CD14-positive monocyte (primary cell): ENCODE measurements at regions of chr19 and their contacts with region 1.

Region 1: DNA sequence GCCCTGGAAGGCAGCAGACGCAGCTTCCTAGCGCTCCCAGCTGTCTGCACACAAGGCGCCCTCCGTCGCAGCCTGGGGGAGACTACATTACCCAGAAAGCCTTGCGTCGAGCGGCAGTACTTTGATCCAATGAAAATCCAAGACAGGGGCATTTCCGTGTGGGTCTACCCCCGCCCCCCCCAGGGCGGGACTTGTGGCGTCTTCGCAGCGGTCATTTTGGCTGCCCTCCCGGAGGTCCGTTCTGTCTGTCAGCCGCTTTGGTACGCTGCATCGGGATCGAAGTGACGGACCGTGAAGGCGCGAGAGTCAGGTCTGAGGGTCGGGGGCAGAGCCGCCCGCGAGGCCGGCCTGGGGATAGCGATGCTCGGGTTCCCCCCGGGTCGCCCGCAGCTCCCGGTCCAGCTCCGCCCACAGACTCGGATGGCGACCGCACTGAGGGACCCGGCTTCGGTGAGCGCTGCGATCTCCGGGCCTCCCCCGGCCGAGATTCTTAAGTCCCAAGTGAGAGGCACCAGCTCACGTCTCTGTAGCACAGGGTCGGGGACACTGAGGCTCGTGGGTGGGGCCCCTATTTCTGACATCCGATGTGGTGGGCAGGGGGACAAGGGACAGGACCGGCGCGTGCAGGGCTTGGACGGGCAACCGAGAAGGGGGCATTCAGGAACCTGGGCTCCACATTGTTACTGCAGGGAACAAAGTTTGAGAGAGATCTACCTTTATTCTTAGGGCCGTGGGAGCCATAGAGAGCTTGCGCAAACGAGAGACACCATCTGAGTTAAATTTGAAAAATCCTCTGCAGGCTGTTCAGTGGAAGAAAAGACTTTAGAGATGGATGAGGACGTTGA is at the start of gene ZNF211:
- DNase-seq: peak; percentile 89 to 92 (median 89)
- H3K4me3 ChIP-seq: peak within 1 kb of the TSS; percentile 75 to 96 (median 92)
- H3K4me3 Mint-ChIP-seq: peak within 1 kb of the TSS; percentile 95
- H3K27ac ChIP-seq: peak within 1 kb of the TSS; percentile 34 to 87
- H3K27ac Mint-ChIP-seq: peak within 1 kb of the TSS; percentile 84 to 95 (median 91)
- H3K4me1 ChIP-seq: peaks cover 12% of the 10 kb centered on the region in 2 donors
- H3K4me1 Mint-ChIP-seq: peaks cover 17% of the 10 kb centered on the region
- H3K27me3 ChIP-seq: no peaks in the 10 kb centered on the region
- H3K27me3 Mint-ChIP-seq: peaks cover 0 to 5% (median 0%) of the 10 kb centered on the region in 3 donors
- CTCF ChIP-seq: no peak
- polyA plus RNA-seq, gene ZNF211: 4.5 to 13.9 (median 6.1) TPM

Region 2: DNA sequence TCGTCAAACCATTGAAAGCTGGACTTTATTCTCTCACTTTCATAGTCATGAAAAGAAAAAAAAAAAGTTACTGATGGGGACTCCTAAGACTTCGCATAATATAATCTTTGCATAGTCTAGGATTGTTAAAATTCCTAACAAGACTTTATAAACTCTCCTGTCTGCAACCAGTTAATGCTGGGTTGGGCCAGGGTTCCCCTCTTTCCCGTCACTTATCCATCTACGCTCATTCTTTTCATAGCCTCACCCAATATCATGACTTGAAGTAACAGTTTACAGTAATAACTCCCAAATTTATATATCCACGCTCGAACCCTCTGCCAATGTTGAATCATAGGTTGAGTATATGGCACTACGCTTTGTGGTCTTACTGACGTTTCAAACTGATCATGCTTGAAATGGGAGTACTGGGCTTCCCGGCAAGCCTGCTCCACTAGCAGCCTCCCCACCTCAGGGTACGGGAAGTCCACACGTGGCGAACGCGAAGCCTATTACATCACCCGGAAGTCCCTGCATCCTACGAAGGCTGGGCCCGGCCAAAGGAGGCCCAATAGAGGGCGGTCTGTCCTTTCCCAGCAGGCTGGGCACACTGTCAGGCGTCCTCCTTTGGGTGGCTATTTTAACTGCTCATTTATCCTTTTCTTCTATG is 353.7 kb before region 1 on chr19:
- intact Hi-C with region 1: loop called in 1 of 2 experiments (anchors 10 kb)
- DNase-seq: peak; percentile 85 to 94 (median 88)
- H3K4me3 ChIP-seq: peak overlapping the region; percentile 80 to 87 (median 85)
- H3K4me3 Mint-ChIP-seq: no peak overlapping the region
- H3K27ac ChIP-seq: peak overlapping the region; percentile 95
- H3K27ac Mint-ChIP-seq: no peak overlapping the region
- H3K4me1 ChIP-seq: peaks cover 18 to 26% of the 10 kb centered on the region in 2 donors
- H3K4me1 Mint-ChIP-seq: peaks cover 18% of the 10 kb centered on the region
- H3K27me3 ChIP-seq: no peaks in the 10 kb centered on the region
- H3K27me3 Mint-ChIP-seq: peaks cover 0 to 3% (median 0%) of the 10 kb centered on the region in 3 donors
- CTCF ChIP-seq: no peak

Region 3: GRCh38 chr19:57389730-57390598 is 243.2 kb before region 1 on chr19 and contains the start of gene ZNF548:
- intact Hi-C with region 1: loop called in 1 of 2 experiments (anchors 10 kb)
- DNase-seq: peak; percentile 98 to 99 (median 98)
- H3K4me3 ChIP-seq: peak within 1 kb of the TSS; percentile 68 to 92 (median 82)
- H3K4me3 Mint-ChIP-seq: peak within 1 kb of the TSS; percentile 91 to 98
- H3K27ac ChIP-seq: peak within 1 kb of the TSS; percentile 82 to 90
- H3K27ac Mint-ChIP-seq: peak within 1 kb of the TSS; percentile 87 to 95 (median 91)
- H3K4me1 ChIP-seq: peaks cover 13 to 18% of the 10 kb centered on the region in 2 donors
- H3K4me1 Mint-ChIP-seq: peaks cover 13% of the 10 kb centered on the region
- H3K27me3 ChIP-seq: no peaks in the 10 kb centered on the region
- H3K27me3 Mint-ChIP-seq: peaks cover 0 to 6% (median 2%) of the 10 kb centered on the region in 3 donors
- CTCF ChIP-seq: no peak
- polyA plus RNA-seq, gene ZNF548: 4.6 to 20.7 (median 6.0) TPM

Region 4: DNA sequence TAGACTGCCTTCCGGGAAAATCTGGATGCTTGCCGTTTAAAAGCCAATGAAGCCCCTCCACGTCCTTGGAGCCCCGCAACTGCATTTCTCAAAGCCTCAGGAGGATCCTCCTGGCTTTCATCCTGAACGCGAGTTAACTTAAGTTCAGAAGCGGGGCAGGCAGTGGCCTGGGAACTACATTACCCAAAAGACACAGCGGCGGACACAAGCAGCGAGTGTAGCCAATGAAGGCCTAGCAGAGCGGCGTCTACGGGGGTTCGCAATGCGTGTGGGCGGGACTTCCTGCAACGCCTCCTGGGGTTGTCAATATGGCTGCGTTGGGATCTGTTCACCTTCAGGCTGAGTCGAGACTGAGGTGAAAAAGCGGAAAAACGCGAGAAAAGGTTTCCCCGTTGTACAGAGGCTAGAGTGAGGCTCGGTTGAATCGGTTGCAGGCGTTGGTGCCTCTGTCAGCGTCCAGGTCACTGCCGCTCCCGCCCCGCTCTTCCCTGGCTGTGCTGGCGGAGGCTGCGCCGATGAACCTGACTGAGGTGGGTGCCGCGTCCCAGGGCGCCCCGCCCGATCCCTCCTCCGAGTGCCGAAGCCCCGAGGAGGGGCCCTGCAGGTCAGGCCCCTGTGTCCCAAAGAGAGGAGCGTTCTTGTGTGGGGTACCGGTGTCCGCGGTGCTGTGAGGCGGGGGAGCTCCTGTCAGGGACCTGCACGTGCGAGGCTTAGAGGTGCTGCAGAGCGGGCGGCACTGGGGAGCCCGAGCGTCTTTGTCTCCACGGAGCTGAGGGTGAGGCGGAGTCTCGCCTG is 222.1 kb before region 1 on chr19 and contains the start of gene ZNF17:
- intact Hi-C with region 1: loop called in 1 of 2 experiments (anchors 5 kb)
- DNase-seq: peak; percentile 87 to 94 (median 90)
- H3K4me3 ChIP-seq: peak within 1 kb of the TSS; percentile 77 to 95 (median 91)
- H3K4me3 Mint-ChIP-seq: peak within 1 kb of the TSS; percentile 94 to 96
- H3K27ac ChIP-seq: peak within 1 kb of the TSS; percentile 10 to 81
- H3K27ac Mint-ChIP-seq: peak within 1 kb of the TSS; percentile 23 to 95 (median 78)
- H3K4me1 ChIP-seq: peaks cover 14 to 17% of the 10 kb centered on the region in 2 donors
- H3K4me1 Mint-ChIP-seq: peaks cover 14% of the 10 kb centered on the region
- H3K27me3 ChIP-seq: no peaks in the 10 kb centered on the region
- H3K27me3 Mint-ChIP-seq: peaks cover 0 to 3% (median 0%) of the 10 kb centered on the region in 3 donors
- CTCF ChIP-seq: no peak
- polyA plus RNA-seq, gene ZNF17: 1.4 to 3.3 (median 2.3) TPM

Region 5: DNA sequence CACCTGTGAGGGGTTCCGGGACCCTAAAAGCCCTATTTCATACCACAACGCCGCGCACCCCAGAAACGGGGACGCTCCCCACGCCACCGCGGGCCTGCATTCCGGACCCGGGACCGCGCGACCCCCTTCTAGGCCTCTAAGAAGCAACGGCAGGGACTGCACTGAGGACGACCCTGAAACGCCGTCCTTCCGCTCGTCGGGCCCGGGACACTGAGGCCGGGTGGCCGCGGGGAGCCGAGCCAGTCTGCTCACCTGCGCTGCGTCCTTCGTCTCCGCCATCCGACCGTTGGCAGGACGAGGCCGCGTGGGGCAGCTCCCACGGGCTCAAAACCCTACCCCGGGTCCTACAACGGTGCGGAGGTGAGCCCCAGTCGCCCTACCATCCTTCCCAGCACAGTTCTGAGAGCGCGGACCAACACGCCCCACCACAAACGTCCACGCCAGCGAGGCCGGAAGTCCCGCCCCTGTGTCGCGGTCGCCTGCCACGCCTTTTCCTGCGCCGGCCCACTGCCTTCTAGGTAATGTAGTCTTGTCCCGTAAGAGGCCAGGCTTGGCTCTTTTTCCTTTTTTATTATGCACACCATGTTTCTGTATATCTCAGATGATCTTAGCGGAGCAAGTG is 73.7 kb before region 1 on chr19 and contains the start of gene ZNF550:
- intact Hi-C with region 1: loop called in 1 of 2 experiments (anchors 2 kb)
- DNase-seq: peak; percentile 68 to 83 (median 75)
- H3K4me3 ChIP-seq: peak within 1 kb of the TSS; percentile 70 to 89 (median 86)
- H3K4me3 Mint-ChIP-seq: peak within 1 kb of the TSS; percentile 91 to 95
- H3K27ac ChIP-seq: peak within 1 kb of the TSS; percentile 1 to 70
- H3K27ac Mint-ChIP-seq: peak within 1 kb of the TSS; percentile 20 to 88 (median 76)
- H3K4me1 ChIP-seq: peaks cover 16 to 20% of the 10 kb centered on the region in 2 donors
- H3K4me1 Mint-ChIP-seq: peaks cover 21% of the 10 kb centered on the region
- H3K27me3 ChIP-seq: no peaks in the 10 kb centered on the region
- H3K27me3 Mint-ChIP-seq: peaks cover 0 to 8% (median 3%) of the 10 kb centered on the region in 3 donors
- CTCF ChIP-seq: no peak
- polyA plus RNA-seq, gene ZNF550: 0.25 to 2.7 (median 0.65) TPM

Region 6: GRCh38 chr19:57578487-57579205 is 54.6 kb before region 1 on chr19 and contains the start of gene ZNF416:
- intact Hi-C with region 1: loop called (anchors 5 kb)
- DNase-seq: peak; percentile 95 to 98 (median 97)
- H3K4me3 ChIP-seq: peak within 1 kb of the TSS; percentile 58 to 92 (median 73)
- H3K4me3 Mint-ChIP-seq: peak within 1 kb of the TSS; percentile 80 to 86
- H3K27ac ChIP-seq: peak within 1 kb of the TSS in 1 of 2 donors; percentile 75
- H3K27ac Mint-ChIP-seq: peak within 1 kb of the TSS in 2 of 7 donors; percentile 54 to 82
- H3K4me1 ChIP-seq: peaks cover 15 to 22% of the 10 kb centered on the region in 2 donors
- H3K4me1 Mint-ChIP-seq: peaks cover 19% of the 10 kb centered on the region
- H3K27me3 ChIP-seq: no peaks in the 10 kb centered on the region
- H3K27me3 Mint-ChIP-seq: peaks cover 0 to 7% (median 4%) of the 10 kb centered on the region in 3 donors
- CTCF ChIP-seq: no peak
- polyA plus RNA-seq, gene ZNF416: 0.48 to 2.1 (median 1.4) TPM

Region 7: DNA sequence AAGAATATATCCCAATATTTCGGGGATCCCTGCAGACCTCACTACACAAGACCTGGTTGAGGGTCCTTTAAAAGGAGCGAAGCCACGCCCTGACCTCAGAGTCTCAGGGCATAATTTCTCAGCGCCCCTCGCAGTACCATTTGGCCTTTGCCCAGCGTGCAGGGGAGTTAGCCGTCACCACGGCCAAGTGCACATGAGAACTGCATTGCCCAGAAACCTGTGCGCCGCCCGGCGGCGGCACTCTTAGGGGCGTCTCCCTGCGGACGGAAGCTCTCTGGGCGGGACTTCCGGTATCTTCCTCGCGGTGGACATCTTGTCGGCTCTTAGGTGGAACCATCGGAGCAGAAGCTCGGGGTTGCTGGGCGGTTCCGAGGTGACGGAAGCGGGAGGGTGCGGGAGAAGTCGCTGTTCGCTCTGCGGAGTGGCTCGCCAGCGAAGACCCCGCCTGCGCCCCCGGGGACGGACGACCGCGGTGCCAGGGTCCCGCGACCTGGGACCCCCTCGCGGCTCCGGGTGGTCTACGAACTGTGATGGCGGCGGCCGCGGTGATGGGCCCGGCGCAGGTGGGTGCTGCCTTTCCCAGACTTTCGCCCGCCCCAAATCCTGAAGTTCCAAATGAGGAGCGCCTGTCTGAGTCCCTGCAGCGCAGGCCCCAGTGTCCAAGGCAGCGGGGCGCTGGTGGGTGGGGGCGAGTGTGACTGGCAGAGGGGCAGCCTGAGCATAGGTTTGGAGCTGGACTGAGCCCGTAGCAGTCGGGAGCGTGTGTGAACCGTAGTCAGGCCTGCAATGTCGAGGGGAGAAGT is 19.1 kb before region 1 on chr19 and contains the start of gene ZNF134:
- intact Hi-C with region 1: no loop called
- DNase-seq: peak; percentile 85 to 90 (median 90)
- H3K4me3 ChIP-seq: peak within 1 kb of the TSS; percentile 73 to 97 (median 89)
- H3K4me3 Mint-ChIP-seq: peak within 1 kb of the TSS; percentile 84 to 97
- H3K27ac ChIP-seq: peak within 1 kb of the TSS in 1 of 2 donors; percentile 88
- H3K27ac Mint-ChIP-seq: peak within 1 kb of the TSS; percentile 10 to 86 (median 41)
- H3K4me1 ChIP-seq: peaks cover 12 to 15% of the 10 kb centered on the region in 2 donors
- H3K4me1 Mint-ChIP-seq: peaks cover 12% of the 10 kb centered on the region
- H3K27me3 ChIP-seq: no peaks in the 10 kb centered on the region
- H3K27me3 Mint-ChIP-seq: peaks cover 0 to 5% (median 2%) of the 10 kb centered on the region in 3 donors
- CTCF ChIP-seq: no peak
- polyA plus RNA-seq, gene ZNF134: 2.2 to 5.4 (median 3.3) TPM

Region 8: GRCh38 chr19:57682226-57682766 is 49.1 kb after region 1 on chr19:
- intact Hi-C with region 1: loop called (anchors 2 to 5 kb)
- DNase-seq: no peak
- H3K4me3 ChIP-seq: peak overlapping the region; percentile 74 to 97 (median 79)
- H3K4me3 Mint-ChIP-seq: peak overlapping the region; percentile 91 to 92
- H3K27ac ChIP-seq: peak overlapping the region; percentile 2 to 87
- H3K27ac Mint-ChIP-seq: peak overlapping the region in 6 of 7 donors; percentile 60 to 90 (median 79)
- H3K4me1 ChIP-seq: peaks cover 11 to 16% of the 10 kb centered on the region in 2 donors
- H3K4me1 Mint-ChIP-seq: peaks cover 19% of the 10 kb centered on the region
- H3K27me3 ChIP-seq: no peaks in the 10 kb centered on the region
- H3K27me3 Mint-ChIP-seq: peaks cover 2 to 15% (median 4%) of the 10 kb centered on the region in 3 donors
- CTCF ChIP-seq: no peak